ENCODE measurements at regions of chr9 and their contacts with region 1.

Region 1: GRCh38 chr9:2132484-2133082 is 117.4 kb downstream of the SMARCA2 start:
- DNase-seq: no peak
- ATAC-seq: no peak
- H3K4me3 ChIP-seq: no peak overlapping the region
- H3K27ac ChIP-seq: no peak overlapping the region
- H3K4me1 ChIP-seq: peaks cover under 1 to 2% of the 10 kb centered on the region in 2 donors
- H3K27me3 ChIP-seq: no peaks in the 10 kb centered on the region

Region 2: GRCh38 chr9:2158111-2158610 is 25.6 kb after region 1 on chr9:
- intact Hi-C with region 1: no loop called
- DNase-seq: peak in 1 of 2 donors; percentile 65
- ATAC-seq: peak; percentile 67
- H3K4me3 ChIP-seq: peak overlapping the region; percentile 91 to 96
- H3K27ac ChIP-seq: peak overlapping the region; percentile 52 to 89
- H3K4me1 ChIP-seq: no peaks in the 10 kb centered on the region
- H3K27me3 ChIP-seq: no peaks in the 10 kb centered on the region

Region 3: DNA sequence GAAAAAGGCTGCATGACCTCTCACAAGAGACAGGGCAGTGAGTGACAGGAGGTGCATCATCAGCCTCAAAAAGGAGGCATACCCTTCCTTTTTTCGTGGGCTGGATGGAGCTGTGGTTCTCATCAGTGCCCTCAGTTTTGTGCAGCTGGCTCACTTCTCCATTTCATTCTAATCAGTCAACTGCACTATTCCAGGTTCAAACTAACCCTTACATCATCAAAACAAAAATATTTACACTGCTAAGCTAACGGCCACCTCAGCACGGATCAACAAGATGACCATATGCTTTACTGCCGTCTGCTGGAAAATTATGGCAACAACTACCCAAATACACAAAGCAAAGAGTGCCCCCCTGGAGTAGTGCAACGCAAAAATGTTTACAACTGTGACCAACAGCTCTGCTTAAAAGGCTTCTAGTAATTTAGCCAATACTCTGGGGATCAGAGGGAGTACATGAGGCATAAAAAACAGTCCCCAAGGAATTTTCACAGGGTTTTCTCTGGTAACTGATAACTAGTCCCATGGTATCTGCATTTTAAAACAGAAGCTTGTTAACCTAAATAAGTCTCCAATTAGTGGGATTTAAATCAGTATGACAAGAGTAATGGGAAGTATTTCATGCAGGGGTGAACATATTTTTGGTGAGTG is 595.5 kb after region 1 on chr9:
- intact Hi-C with region 1: loop called in 1 of 2 experiments (anchors 10 kb)
- DNase-seq: no peak
- ATAC-seq: peak; percentile 59
- H3K4me3 ChIP-seq: no peak overlapping the region
- H3K27ac ChIP-seq: no peak overlapping the region
- H3K4me1 ChIP-seq: peaks cover 0 to 3% of the 10 kb centered on the region in 2 donors
- H3K27me3 ChIP-seq: no peaks in the 10 kb centered on the region